ENCODE measurements at regions of chr2 and their contacts with region 1.

Region 1: GRCh38 chr2:133530645-133531044 is 37.6 kb downstream of the NCKAP5 start:
- DNase-seq: no peak
- ATAC-seq: no peak

Region 2: GRCh38 chr2:133506935-133507334 is 23.7 kb before region 1 on chr2:
- intact Hi-C with region 1: loop called (anchors 1 kb)
- DNase-seq: no peak
- ATAC-seq: no peak

Measured in left ventricle myocardium superior (tissue), 1 donor.